Activated CD8-positive, alpha-beta memory T cell treated with anti-CD3 and anti-CD28 coated beads, Interleukin-2, amount 10 ng/mL, durations not matched to agents 7 days and 5 days (primary cell): ENCODE measurements at regions of chr5 and their contacts with region 1.

Region 1: DNA sequence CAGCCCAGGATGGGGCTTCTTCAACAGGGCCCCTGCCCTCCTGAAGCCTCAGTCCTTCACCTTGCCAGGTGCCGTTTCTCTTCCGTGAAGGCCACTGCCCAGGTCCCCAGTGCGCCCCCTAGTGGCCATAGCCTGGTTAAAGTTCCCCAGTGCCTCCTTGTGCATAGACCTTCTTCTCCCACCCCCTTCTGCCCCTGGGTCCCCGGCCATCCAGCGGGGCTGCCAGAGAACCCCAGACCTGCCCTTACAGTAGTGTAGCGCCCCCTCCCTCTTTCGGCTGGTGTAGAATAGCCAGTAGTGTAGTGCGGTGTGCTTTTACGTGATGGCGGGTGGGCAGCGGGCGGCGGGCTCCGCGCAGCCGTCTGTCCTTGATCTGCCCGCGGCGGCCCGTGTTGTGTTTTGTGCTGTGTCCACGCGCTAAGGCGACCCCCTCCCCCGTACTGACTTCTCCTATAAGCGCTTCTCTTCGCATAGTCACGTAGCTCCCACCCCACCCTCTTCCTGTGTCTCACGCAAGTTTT is 23.6 kb downstream of the PCDHGC5 start:
- DNase-seq: peak; percentile 89
- ATAC-seq: peak; percentile 62
- H3K4me3 Mint-ChIP-seq: peak overlapping the region; percentile 36
- H3K27ac Mint-ChIP-seq: peak overlapping the region; percentile 52
- H3K4me1 Mint-ChIP-seq: peaks cover 24% of the 10 kb centered on the region
- H3K27me3 Mint-ChIP-seq: peaks cover 3% of the 10 kb centered on the region

Region 2: DNA sequence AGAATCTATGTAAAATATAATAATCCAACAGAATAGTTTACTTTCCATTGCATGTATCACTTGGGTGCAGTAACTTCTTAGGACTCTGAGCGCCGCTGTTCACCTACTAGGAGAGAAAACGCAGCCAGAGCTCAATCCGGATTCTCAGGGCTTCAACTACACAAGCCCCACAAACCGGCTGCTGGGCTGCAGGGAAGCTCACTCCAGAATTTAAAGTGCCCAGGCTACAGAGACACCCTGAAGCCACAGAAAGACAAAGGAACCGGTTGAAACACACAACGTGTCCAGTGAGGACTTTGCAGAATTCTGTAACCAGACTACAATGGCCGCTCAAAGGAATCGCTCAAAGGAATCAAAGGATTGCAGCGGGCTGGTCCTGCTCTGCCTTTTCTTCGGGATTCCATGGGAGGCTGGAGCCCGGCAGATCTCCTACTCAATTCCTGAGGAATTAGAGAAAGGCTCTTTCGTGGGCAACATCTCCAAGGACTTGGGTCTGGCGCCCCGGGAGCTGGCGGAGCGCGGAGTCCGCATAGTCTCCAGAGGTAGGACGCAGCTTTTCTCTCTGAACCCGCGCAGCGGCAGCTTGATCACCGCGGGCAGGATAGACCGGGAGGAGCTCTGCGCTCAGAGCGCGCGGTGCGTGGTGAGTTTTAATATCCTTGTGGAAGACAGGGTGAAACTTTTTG is 99.5 kb before region 1 on chr5 and contains the start of gene PCDHGA10:
- CTCF ChIA-PET with region 1: interaction called, 10 read pairs
- DNase-seq: peak; percentile 69
- ATAC-seq: peak; percentile 72
- H3K4me3 Mint-ChIP-seq: peak within 1 kb of the TSS; percentile 60
- H3K27ac Mint-ChIP-seq: no peak within 1 kb of the TSS
- H3K4me1 Mint-ChIP-seq: peaks cover 15% of the 10 kb centered on the region
- H3K27me3 Mint-ChIP-seq: peaks cover 74% of the 10 kb centered on the region
- total RNA-seq, gene PCDHGA10: not detected

Region 3: GRCh38 chr5:141430332-141431113 is 81.9 kb before region 1 on chr5 and contains the start of gene PCDHGA12:
- CTCF ChIA-PET with region 1: interaction called, 12 read pairs
- DNase-seq: no peak
- ATAC-seq: no peak
- H3K4me3 Mint-ChIP-seq: peak within 1 kb of the TSS; percentile 43
- H3K27ac Mint-ChIP-seq: peak within 1 kb of the TSS; percentile 69
- H3K4me1 Mint-ChIP-seq: peaks cover 5% of the 10 kb centered on the region
- H3K27me3 Mint-ChIP-seq: peaks cover 52% of the 10 kb centered on the region
- total RNA-seq, gene PCDHGA12: 0.07 TPM in 1 of 2 experiments, not detected in the other

Region 4: GRCh38 chr5:141557681-141558136 is 45.3 kb after region 1 on chr5:
- CTCF ChIA-PET with region 1: interaction called, 13 read pairs
- DNase-seq: peak; percentile 78
- ATAC-seq: peak; percentile 78
- H3K4me3 Mint-ChIP-seq: no peak overlapping the region
- H3K27ac Mint-ChIP-seq: peak overlapping the region; percentile 38
- H3K4me1 Mint-ChIP-seq: peaks cover 14% of the 10 kb centered on the region
- H3K27me3 Mint-ChIP-seq: no peaks in the 10 kb centered on the region